HCT116 (cell line): ENCODE measurements at regions of chr1 and their contacts with region 1.

Region 1: DNA sequence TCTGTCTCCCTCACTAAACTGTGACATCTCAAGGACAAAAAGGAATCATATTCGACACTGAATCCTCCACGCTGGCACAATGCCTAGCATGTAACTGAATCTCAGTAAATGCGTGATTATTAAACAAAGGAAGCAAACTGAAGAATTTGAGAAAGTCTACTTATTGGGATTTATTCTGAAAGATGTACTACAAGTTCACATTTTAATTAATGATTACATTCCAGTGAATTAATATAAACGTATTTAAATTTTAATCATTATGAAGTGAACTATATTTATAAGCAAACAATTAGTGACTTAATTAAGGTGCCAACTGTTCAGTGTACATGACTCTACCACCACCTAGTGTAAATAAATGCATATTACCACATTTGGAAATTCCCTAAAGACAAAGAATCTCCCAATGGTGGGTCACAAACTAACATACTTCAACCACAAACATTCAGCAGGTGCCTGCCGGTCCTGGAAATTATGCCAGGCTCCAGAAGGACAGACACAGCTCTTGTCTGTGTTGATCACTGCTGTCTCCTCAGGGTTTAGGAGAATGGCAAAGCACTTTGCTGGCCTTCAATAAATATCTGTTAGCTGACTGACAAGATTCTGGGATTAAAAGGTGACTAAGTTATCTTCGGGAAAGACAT is 56.3 kb downstream of the SMYD3 start:
- DNase-seq: peak; percentile 12
- ATAC-seq: peak; percentile 76
- H3K4me3 ChIP-seq: no peak overlapping the region
- H3K27ac ChIP-seq: no peak overlapping the region
- H3K4me1 ChIP-seq: no peaks in the 10 kb centered on the region
- H3K27me3 ChIP-seq: no peaks in the 10 kb centered on the region
- CTCF ChIP-seq: peak; percentile 48 to 65 (median 61); a peak in 4 of 6 replicates
- POLR2A ChIP-seq: no peak
- RAD21 ChIP-seq: peak; percentile 86

Region 2: GRCh38 chr1:245888809-245889208 is 561.9 kb before region 1 on chr1:
- CTCF ChIA-PET with region 1: interaction called, 4 read pairs
- POLR2A ChIA-PET with region 1: no interaction called
- RAD21 ChIA-PET with region 1: no interaction called
- intact Hi-C with region 1: loop called (anchors 2 kb)
- DNase-seq: peak; percentile 23
- ATAC-seq: peak; percentile 83
- H3K4me3 ChIP-seq: no peak overlapping the region
- H3K27ac ChIP-seq: no peak overlapping the region
- H3K4me1 ChIP-seq: no peaks in the 10 kb centered on the region
- H3K27me3 ChIP-seq: no peaks in the 10 kb centered on the region
- CTCF ChIP-seq: peak; percentile 35 to 70 (median 59); a peak in 5 of 6 replicates
- POLR2A ChIP-seq: no peak
- RAD21 ChIP-seq: peak; percentile 40

Region 3: DNA sequence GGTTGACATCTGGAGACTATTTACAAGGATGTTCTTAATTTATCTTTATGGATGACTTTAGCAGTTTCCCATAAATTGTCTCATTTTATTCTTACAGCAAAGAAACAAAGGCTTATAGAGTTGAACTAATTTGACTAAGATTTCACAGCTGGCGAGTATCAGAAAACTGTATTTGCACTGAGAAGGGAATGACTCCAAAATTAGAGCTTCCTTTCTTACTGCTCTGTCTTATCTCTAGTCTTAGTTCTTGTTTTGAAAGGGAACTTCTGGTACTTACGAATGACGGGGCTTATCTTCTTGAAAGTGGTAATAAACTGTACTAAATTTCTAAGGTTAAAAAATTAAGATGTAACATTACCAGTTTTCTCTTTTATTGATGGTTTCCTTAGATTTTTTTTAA is 129.1 kb after region 1 on chr1:
- CTCF ChIA-PET with region 1: no interaction called
- POLR2A ChIA-PET with region 1: no interaction called
- RAD21 ChIA-PET with region 1: no interaction called
- intact Hi-C with region 1: no loop called
- DNase-seq: no peak
- ATAC-seq: no peak
- H3K4me3 ChIP-seq: no peak overlapping the region
- H3K27ac ChIP-seq: no peak overlapping the region
- H3K4me1 ChIP-seq: no peaks in the 10 kb centered on the region
- H3K27me3 ChIP-seq: no peaks in the 10 kb centered on the region
- CTCF ChIP-seq: no peak
- POLR2A ChIP-seq: no peak
- RAD21 ChIP-seq: no peak

Region 4: DNA sequence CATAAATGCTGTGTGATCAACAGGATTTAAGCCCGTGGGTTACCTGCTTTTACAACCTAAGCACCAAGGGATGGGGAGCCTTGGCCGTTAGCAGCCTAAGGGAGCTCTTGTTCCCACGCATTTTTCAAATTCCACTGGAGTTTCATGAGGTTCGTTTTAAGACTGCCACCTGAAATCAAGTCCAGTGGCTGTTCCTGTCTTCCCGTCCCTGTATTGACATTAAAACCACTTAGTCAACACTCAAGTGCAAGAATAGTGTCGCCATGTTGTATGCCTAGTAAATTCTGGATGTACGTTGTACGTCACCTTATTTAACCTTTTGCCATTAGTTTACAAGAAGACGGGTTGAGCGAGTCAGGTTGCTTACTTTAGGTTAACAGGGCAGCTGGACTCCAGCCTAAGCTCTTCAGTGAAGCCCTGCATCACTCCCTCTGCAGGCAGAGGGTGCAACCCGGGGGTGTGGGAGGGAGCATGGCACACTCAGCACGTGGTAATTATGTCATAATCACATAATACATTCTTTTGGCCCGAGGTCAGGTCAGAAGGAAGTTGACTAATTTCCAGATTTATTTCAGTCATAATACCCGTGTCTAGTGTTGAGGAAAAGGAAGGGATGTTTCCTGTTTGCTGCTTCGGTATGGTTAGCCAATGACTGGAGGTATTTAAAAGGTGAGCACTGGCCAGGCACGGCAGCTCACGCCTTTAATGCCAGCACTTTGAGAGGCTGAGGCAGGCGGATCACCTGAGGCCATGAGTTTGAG is 158.1 kb after region 1 on chr1:
- CTCF ChIA-PET with region 1: no interaction called
- POLR2A ChIA-PET with region 1: no interaction called
- RAD21 ChIA-PET with region 1: no interaction called
- intact Hi-C with region 1: no loop called
- DNase-seq: peak; percentile 56
- ATAC-seq: peak; percentile 92
- H3K4me3 ChIP-seq: peak overlapping the region in 1 of 2 experiments; percentile 19; a peak in 2 of 4 replicates
- H3K27ac ChIP-seq: peak overlapping the region; percentile 37
- H3K4me1 ChIP-seq: peaks cover 16 to 17% of the 10 kb centered on the region in 2 experiments
- H3K27me3 ChIP-seq: no peaks in the 10 kb centered on the region
- CTCF ChIP-seq: peak in 2 of 3 experiments; percentile 10; a peak in 1 of 6 replicates
- POLR2A ChIP-seq: no peak
- RAD21 ChIP-seq: peak; percentile 16; the same call in 1 of the 2 replicates

Region 5: GRCh38 chr1:246798606-246799515 is 348.1 kb after region 1 on chr1:
- CTCF ChIA-PET with region 1: no interaction called
- POLR2A ChIA-PET with region 1: no interaction called
- RAD21 ChIA-PET with region 1: no interaction called
- intact Hi-C with region 1: no loop called
- DNase-seq: no peak
- ATAC-seq: no peak
- H3K4me3 ChIP-seq: no peak overlapping the region
- H3K27ac ChIP-seq: no peak overlapping the region
- H3K4me1 ChIP-seq: no peaks in the 10 kb centered on the region
- H3K27me3 ChIP-seq: no peaks in the 10 kb centered on the region
- CTCF ChIP-seq: no peak
- POLR2A ChIP-seq: no peak
- RAD21 ChIP-seq: no peak